H1 (cell line): ENCODE measurements at regions of chr16 and their contacts with region 1.

Region 1: DNA sequence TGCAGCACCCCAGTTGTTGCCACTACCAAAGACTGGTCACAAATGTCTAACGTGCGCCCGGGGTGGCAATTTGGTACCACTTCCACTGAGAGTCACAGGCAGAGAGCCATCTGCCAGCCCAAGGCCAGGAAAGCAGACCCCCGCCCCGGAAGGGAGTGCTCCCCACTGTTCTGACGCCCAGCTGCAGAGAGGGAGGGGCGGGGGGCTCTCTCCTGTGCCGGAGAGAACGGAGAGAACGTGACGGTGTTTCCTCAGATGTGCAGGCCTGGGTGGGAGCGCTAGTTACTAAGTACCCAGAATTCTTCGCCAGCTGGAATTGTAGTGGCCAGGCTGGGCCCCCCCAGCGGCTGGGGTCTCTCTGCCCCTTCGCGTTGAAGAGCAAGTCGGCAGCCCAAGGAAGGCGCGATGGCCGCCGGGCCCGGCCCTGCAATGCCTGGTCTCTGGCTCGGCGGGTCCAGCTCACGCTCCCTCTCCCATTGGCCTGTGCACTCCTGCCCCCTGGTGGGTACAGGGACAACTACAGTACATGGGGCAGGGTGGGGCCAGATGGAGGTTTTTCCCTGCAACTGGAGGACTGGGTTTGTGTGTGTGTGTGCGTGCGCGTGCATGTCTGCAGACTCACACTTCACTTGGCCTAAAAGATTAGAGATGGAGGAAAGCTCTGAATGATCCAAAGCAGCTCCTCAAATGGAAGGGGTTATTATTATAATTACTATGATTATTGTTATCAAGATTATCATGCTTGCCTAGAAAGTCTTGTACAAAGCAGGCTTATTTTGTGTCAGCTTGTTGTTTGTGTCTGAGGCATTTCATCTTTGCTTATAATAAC is 107.1 kb downstream of the AMFR start:
- DNase-seq: peak; percentile 49 to 95
- H3K4me3 ChIP-seq: peak overlapping the region in 3 of 4 experiments; percentile 31 to 55 (median 42); a peak in 4 of 8 replicates
- H3K27ac ChIP-seq: no peak overlapping the region
- H3K4me1 ChIP-seq: peaks cover 0 to 4% (median 3%) of the 10 kb centered on the region in 4 experiments; a peak in 2 of 7 replicates
- H3K27me3 ChIP-seq: peaks cover 0 to 5% (median 0%) of the 10 kb centered on the region in 4 experiments; a peak in 2 of 7 replicates
- CTCF ChIP-seq: peak; percentile 91 to 95 (median 92)
- EP300 ChIP-seq: no peak
- POLR2A ChIP-seq: peak in 1 of 2 experiments; percentile 47; a peak in 1 of 3 replicates
- RAD21 ChIP-seq: peak; percentile 97

Region 2: GRCh38 chr16:55944377-55944802 is 373.8 kb before region 1 on chr16:
- CTCF ChIA-PET with region 1: interaction called, 29 read pairs
- POLR2A ChIA-PET with region 1: no interaction called
- DNase-seq: peak; percentile 38 to 89
- H3K4me3 ChIP-seq: no peak overlapping the region
- H3K27ac ChIP-seq: no peak overlapping the region
- H3K4me1 ChIP-seq: 0 out of 7 replicates have a peak, but pooled peaks cover 0 to 2% (median 0%) of the 10 kb centered on the region in 4 experiments
- H3K27me3 ChIP-seq: no peaks in the 10 kb centered on the region
- CTCF ChIP-seq: peak; percentile 85 to 94 (median 91)
- EP300 ChIP-seq: no peak
- POLR2A ChIP-seq: no peak
- RAD21 ChIP-seq: peak; percentile 83 to 89

Region 3: GRCh38 chr16:56193951-56194726 is 124.1 kb before region 1 on chr16:
- CTCF ChIA-PET with region 1: interaction called, 12 read pairs
- POLR2A ChIA-PET with region 1: no interaction called
- DNase-seq: peak; percentile 81 to 99
- H3K4me3 ChIP-seq: peak overlapping the region; percentile 28 to 85 (median 44); a peak in 7 of 8 replicates
- H3K27ac ChIP-seq: no peak overlapping the region
- H3K4me1 ChIP-seq: peaks cover 17 to 29% (median 23%) of the 10 kb centered on the region in 4 experiments
- H3K27me3 ChIP-seq: peaks cover 0 to 26% (median 16%) of the 10 kb centered on the region in 4 experiments; a peak in 6 of 7 replicates
- CTCF ChIP-seq: no peak
- EP300 ChIP-seq: peak in 1 of 2 experiments; percentile 24; a peak in 1 of 3 replicates
- POLR2A ChIP-seq: no peak
- RAD21 ChIP-seq: 0 out of 4 replicates have a peak, but pooled peaks of 1 of the 2 experiments have one; percentile 15

Region 4: GRCh38 chr16:56226845-56227525 is 91.2 kb before region 1 on chr16:
- CTCF ChIA-PET with region 1: no interaction called
- POLR2A ChIA-PET with region 1: no interaction called
- DNase-seq: no peak
- H3K4me3 ChIP-seq: no peak overlapping the region
- H3K27ac ChIP-seq: no peak overlapping the region
- H3K4me1 ChIP-seq: peaks cover 0 to 8% (median 3%) of the 10 kb centered on the region in 4 experiments; a peak in 2 of 7 replicates
- H3K27me3 ChIP-seq: no peaks in the 10 kb centered on the region
- CTCF ChIP-seq: no peak
- EP300 ChIP-seq: no peak
- POLR2A ChIP-seq: no peak
- RAD21 ChIP-seq: no peak

Region 5: GRCh38 chr16:56262148-56262547 is 56.1 kb before region 1 on chr16:
- CTCF ChIA-PET with region 1: interaction called, 12 read pairs
- POLR2A ChIA-PET with region 1: no interaction called
- DNase-seq: no peak
- H3K4me3 ChIP-seq: no peak overlapping the region
- H3K27ac ChIP-seq: no peak overlapping the region
- H3K4me1 ChIP-seq: peaks cover 0 to 3% (median 0%) of the 10 kb centered on the region in 4 experiments; a peak in 3 of 7 replicates
- H3K27me3 ChIP-seq: no peaks in the 10 kb centered on the region
- CTCF ChIP-seq: no peak
- EP300 ChIP-seq: no peak
- POLR2A ChIP-seq: no peak
- RAD21 ChIP-seq: no peak

Region 6: GRCh38 chr16:56281256-56281805 is 36.9 kb before region 1 on chr16:
- CTCF ChIA-PET with region 1: interaction called, 35 read pairs
- POLR2A ChIA-PET with region 1: interaction called, 6 read pairs
- DNase-seq: peak; percentile 68 to 91
- H3K4me3 ChIP-seq: peak overlapping the region in 1 of 4 experiments; percentile 44; a peak in 3 of 8 replicates
- H3K27ac ChIP-seq: no peak overlapping the region
- H3K4me1 ChIP-seq: peaks cover 0 to 41% (median 32%) of the 10 kb centered on the region in 4 experiments; a peak in 6 of 7 replicates
- H3K27me3 ChIP-seq: no peaks in the 10 kb centered on the region
- CTCF ChIP-seq: peak in 2 of 3 experiments; percentile 34 to 64; a peak in 3 of 4 replicates
- EP300 ChIP-seq: peak in 1 of 2 experiments; percentile 83; a peak in 1 of 3 replicates
- POLR2A ChIP-seq: no peak
- RAD21 ChIP-seq: peak in 1 of 2 experiments; percentile 10; a peak in 2 of 4 replicates

Region 7: DNA sequence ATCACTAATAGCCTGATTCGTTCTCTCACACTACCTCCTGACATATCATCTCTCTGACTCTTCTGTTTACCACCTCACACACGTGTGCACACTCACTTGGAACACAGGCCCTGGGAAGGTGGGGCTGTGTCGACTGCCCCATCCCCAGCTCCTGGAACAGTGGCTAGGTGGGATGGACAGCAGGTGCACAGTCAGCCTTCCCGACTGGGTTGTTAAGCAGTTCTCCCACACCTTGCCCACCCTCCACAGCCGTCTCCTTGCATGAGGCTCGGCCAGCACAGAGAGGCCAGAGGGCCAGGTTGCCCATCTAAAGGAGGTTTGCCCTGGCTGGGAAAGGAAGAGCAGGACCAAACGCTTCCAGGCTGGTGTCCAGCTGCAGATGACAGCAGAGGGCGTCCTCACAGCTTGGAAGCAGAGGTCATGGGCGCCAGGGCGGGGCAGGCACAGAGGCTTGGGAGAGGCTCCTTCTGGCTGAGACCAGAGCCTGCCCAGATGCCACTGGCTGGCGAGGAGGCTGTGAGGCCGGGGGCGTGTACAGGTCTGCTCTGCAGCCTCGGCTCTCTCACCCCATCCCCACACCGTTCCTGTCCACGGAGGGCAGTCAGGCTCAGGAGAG is 14.4 kb after region 1 on chr16:
- CTCF ChIA-PET with region 1: interaction called, 61 read pairs
- POLR2A ChIA-PET with region 1: no interaction called
- DNase-seq: peak in 1 of 2 experiments; percentile 66
- H3K4me3 ChIP-seq: no peak overlapping the region
- H3K27ac ChIP-seq: no peak overlapping the region
- H3K4me1 ChIP-seq: no peaks in the 10 kb centered on the region
- H3K27me3 ChIP-seq: no peaks in the 10 kb centered on the region
- CTCF ChIP-seq: peak; percentile 56 to 64 (median 59)
- EP300 ChIP-seq: no peak
- POLR2A ChIP-seq: no peak
- RAD21 ChIP-seq: peak; percentile 45 to 59